ENCODE measurements at regions of chr4 and their contacts with region 1.

Region 1: DNA sequence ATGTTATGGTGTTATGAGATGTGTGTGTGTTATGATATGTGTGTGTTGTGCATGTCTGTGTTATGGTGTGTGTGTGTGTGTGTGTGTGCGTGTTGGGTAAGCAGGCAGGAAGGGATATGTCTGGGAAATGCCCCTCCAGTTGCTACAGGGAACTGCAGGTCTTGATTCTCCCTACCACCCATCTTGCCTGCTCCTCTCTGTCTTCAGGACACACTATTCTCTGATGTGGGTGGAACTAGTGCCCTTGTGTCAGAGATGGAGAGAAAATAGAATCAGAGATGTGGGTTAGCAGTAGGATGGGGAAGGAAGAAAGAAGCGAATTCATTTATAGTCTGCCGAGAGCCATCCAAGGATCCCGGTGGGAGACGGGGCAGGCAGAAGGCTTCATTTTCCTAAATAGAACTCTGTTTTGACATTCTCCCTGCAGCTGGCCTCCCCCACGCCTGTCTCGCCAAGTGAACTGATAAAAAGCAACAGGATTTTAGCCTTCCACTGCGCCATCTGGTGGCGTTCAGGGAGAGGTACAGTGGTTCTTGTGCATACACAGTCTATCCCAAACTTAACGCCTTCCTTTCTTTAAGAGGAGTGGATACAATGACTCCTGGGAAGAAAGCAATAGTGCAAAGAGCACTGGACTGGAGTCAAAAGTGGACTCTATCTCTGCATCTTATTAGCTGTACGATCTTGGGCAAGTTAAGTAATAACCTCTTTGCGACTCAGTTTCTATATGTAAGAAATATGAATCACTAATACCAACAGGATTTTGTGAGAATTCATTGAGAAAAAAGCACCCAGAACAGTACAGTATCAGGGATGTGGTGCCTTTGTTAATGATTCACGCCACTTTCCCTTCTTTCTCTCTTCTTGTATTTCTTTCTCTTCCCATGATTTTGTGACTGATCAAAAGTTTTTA is 14.1 kb upstream of the MGST2 start:
- DNase-seq: peak; percentile 74
- H3K4me3 ChIP-seq: no peak overlapping the region
- H3K27ac ChIP-seq: no peak overlapping the region
- H3K4me1 ChIP-seq: peaks cover 5% of the 10 kb centered on the region
- CTCF ChIP-seq: peak; percentile 96

Region 2: GRCh38 chr4:139501927-139502899 is 149.3 kb before region 1 on chr4:
- CTCF ChIA-PET with region 1: no interaction called
- POLR2A ChIA-PET with region 1: no interaction called
- intact Hi-C with region 1: loop called (anchors 1 kb)
- DNase-seq: no peak
- H3K4me3 ChIP-seq: no peak overlapping the region
- H3K27ac ChIP-seq: no peak overlapping the region
- H3K4me1 ChIP-seq: no peaks in the 10 kb centered on the region
- CTCF ChIP-seq: no peak

Region 3: DNA sequence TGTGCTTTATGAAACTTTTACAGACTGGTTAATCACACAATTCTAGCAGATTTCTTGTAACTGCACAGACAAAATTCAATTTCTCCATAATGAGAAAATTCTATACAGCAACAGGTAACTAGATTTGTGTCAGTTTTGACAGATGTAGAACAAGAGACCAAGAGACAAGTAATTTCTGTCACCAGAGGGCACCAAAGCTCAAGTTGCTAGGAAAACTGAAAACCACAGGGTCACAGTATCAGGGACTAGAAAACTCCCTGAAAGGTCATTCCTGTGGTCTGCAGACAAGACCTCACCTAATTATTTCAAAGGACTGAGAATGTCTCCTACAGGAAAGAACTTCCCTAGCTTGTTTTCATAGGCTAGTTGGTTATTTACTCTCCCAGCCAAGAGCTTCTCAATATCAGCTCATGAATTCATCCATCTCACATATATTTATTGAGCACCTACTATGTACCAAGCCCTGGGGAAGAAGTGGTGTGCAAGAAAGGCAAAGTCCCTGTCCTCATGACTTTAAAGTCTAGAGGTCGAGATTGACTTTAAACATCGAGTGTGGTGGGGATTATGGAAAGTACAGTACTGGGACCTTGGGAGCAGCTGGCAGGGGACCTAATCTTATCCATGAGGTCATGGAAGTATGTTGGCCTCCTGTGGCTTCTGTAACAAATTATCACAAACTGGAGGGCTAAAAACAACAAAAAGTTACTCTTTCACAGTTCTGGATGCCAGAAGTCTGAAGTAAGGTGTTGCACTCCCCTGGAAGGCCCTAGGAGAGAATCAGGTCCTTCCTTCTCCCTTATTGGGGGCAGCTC is 47.8 kb before region 1 on chr4:
- CTCF ChIA-PET with region 1: interaction called, 3 read pairs
- POLR2A ChIA-PET with region 1: no interaction called
- intact Hi-C with region 1: loop called (anchors 1 kb)
- DNase-seq: peak; percentile 64
- H3K4me3 ChIP-seq: no peak overlapping the region
- H3K27ac ChIP-seq: no peak overlapping the region
- H3K4me1 ChIP-seq: no peaks in the 10 kb centered on the region
- CTCF ChIP-seq: peak; percentile 88

Measured in OCI-LY7 (cell line).